CD4-positive, alpha-beta memory T cell (primary cell): ENCODE measurements at regions of chr3 and their contacts with region 1.

Region 1: GRCh38 chr3:160434071-160434470 is 15.5 kb downstream of the TRIM59 start:
- DNase-seq: no peak
- H3K4me3 ChIP-seq: no peak overlapping the region
- H3K4me3 Mint-ChIP-seq: no peak overlapping the region
- H3K27ac ChIP-seq: no peak overlapping the region
- H3K27ac Mint-ChIP-seq: no peak overlapping the region
- H3K4me1 ChIP-seq: peaks cover 34% of the 10 kb centered on the region
- H3K4me1 Mint-ChIP-seq: peaks cover 24 to 41% (median 34%) of the 10 kb centered on the region in 4 donors
- H3K27me3 ChIP-seq: no peaks in the 10 kb centered on the region
- H3K27me3 Mint-ChIP-seq: no peaks in the 10 kb centered on the region

Region 2: GRCh38 chr3:160449636-160450598 is 15.8 kb after region 1 on chr3 and contains the start of gene TRIM59:
- CTCF ChIA-PET with region 1: interaction called, 17 read pairs
- POLR2A ChIA-PET with region 1: interaction called, 8 read pairs
- intact Hi-C with region 1: no loop called
- DNase-seq: peak; percentile 93 to 98 (median 97)
- H3K4me3 ChIP-seq: peak within 1 kb of the TSS; percentile 82 to 91
- H3K4me3 Mint-ChIP-seq: peak within 1 kb of the TSS; percentile 93 to 100 (median 98)
- H3K27ac ChIP-seq: peak within 1 kb of the TSS; percentile 81
- H3K27ac Mint-ChIP-seq: peak within 1 kb of the TSS; percentile 92 to 99 (median 97)
- H3K4me1 ChIP-seq: peaks cover 35% of the 10 kb centered on the region
- H3K4me1 Mint-ChIP-seq: peaks cover 18 to 48% (median 33%) of the 10 kb centered on the region in 4 donors
- H3K27me3 ChIP-seq: no peaks in the 10 kb centered on the region
- H3K27me3 Mint-ChIP-seq: no peaks in the 10 kb centered on the region
- total RNA-seq, gene TRIM59: 26.3 to 28.3 TPM